Left lung (tissue), 14 donors: ENCODE measurements at regions of chr6 and their contacts with region 1.

Region 1: DNA sequence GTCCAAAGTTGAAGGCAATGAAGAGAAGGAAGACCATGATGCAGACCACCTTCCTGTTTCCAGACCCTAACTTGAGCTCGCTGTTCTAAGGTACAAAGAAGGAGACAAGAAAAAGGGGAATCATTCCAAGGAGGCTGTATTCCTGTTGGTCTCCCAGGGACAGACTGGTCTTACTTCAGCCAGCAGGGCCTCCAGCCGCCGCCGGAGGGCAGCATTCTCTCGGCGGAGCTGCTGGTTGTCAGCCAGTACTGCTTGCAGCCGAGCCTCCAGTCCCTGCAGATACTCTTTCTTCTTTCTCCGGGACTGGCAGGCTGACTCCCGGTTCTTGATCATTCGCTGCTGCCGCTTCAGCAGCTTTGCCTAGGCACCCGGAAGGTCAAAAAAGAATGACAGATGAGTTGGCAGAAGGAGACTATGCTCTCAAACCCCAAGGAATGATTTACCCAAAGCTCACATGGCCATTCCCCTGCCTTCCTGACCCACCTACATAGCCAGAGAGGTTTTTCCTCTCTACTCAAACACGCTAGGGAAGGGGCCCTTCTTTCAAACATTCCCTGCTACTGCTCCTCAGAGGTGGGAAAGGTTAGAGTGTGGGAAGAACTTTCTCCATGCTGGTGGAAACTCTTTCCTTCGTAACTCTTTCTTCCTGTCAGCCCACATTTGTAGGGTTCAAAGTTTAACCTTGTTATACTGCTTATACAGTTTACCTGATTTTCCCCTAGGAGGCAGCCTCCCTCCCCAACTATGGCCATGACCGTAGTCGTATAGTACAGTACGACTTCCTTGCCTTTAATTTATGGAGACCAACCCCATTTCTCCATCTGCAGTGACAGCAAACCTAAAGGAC is 9.0 kb downstream of the ATF6B start:
- DNase-seq: peak; percentile 77 to 96 (median 88)
- ATAC-seq: peak; percentile 88
- H3K4me3 ChIP-seq: no peak overlapping the region
- H3K27ac ChIP-seq: peak overlapping the region; percentile 57 to 70
- H3K4me1 ChIP-seq: peaks cover 4 to 28% of the 10 kb centered on the region in 2 donors
- H3K27me3 ChIP-seq: no peaks in the 10 kb centered on the region
- CTCF ChIP-seq: peak; percentile 92 to 94

Region 2: GRCh38 chr6:32153564-32154513 is 34.8 kb after region 1 on chr6 and contains the start of gene PPT2:
- intact Hi-C with region 1: loop called in 1 of 2 experiments (anchors 5 kb)
- DNase-seq: peak in 3 of 4 donors; percentile 81 to 97 (median 94)
- ATAC-seq: peak; percentile 71
- H3K4me3 ChIP-seq: peak within 1 kb of the TSS; percentile 47 to 62
- H3K27ac ChIP-seq: peak within 1 kb of the TSS; percentile 80 to 84
- H3K4me1 ChIP-seq: peaks cover 15 to 45% of the 10 kb centered on the region in 2 donors
- H3K27me3 ChIP-seq: peaks cover 31 to 85% of the 10 kb centered on the region in 2 donors
- CTCF ChIP-seq: no peak
- polyA plus RNA-seq, gene PPT2: 23.2 to 32.5 (median 28.1) TPM

Region 3: DNA sequence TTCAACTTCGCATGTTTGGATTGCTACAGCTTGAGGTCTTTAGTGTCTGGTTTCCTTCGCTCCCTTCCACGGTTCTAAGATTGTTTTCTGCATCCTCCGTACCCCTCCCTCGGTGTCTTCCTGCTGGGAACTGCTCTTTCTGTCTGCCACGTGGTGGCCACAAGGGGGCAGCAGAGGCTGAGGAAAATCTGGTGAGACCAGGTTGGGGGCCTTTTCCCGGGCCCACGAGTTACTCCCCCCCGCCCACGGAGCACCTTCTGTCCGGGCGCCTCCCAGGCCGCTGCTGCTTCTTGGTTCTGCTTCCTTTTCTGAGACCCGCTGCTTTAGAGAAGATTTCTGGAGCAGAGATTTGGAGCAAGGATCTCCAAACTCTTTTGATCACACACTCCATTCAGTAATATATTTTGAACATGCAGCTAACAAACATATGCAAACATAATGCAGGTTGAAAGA is 126.0 kb after region 1 on chr6:
- intact Hi-C with region 1: loop called in 1 of 2 experiments (anchors 5 kb)
- DNase-seq: peak; percentile 66 to 90 (median 80)
- ATAC-seq: peak; percentile 97
- H3K4me3 ChIP-seq: no peak overlapping the region
- H3K27ac ChIP-seq: peak overlapping the region; percentile 27 to 64
- H3K4me1 ChIP-seq: peaks cover 0 to 10% of the 10 kb centered on the region in 2 donors
- H3K27me3 ChIP-seq: no peaks in the 10 kb centered on the region
- CTCF ChIP-seq: peak; percentile 93

Region 4: GRCh38 chr6:32288426-32288825 is 169.4 kb after region 1 on chr6:
- intact Hi-C with region 1: no loop called
- DNase-seq: no peak
- ATAC-seq: no peak
- H3K4me3 ChIP-seq: no peak overlapping the region
- H3K27ac ChIP-seq: no peak overlapping the region
- H3K4me1 ChIP-seq: no peaks in the 10 kb centered on the region
- H3K27me3 ChIP-seq: no peaks in the 10 kb centered on the region
- CTCF ChIP-seq: no peak